ENCODE measurements at regions of chr11 and their contacts with region 1.

Region 1: GRCh38 chr11:60334005-60334620 is 7.1 kb downstream of the MS4A6E start:
- DNase-seq: no peak
- ATAC-seq: peak; percentile 65
- H3K4me3 ChIP-seq: no peak overlapping the region
- H3K27ac ChIP-seq: no peak overlapping the region
- H3K4me1 ChIP-seq: peaks cover 22% of the 10 kb centered on the region
- H3K27me3 ChIP-seq: no peaks in the 10 kb centered on the region
- CTCF ChIP-seq: peak; percentile 73 to 86 (median 74)
- EP300 ChIP-seq: no peak
- POLR2A ChIP-seq: no peak
- RAD21 ChIP-seq: peak; percentile 67

Region 2: DNA sequence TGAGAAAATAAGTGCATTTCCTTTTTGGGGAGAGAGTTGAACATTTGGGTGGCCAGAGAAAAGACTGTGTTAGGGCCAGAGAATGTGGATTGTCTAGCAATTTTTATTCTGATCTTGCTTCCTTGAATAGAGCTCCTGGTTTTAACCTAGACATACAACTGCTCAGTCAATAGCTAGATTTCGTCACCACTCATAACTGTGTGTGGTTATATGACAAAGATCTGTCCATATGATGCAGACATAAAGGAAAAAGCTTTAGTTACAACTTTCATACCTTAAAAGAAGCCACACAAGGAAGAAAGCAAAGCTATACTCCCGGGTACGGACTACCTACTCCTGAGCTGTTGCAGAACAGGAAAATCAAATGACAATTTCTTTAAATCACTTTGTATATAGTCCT is 188.4 kb before region 1 on chr11:
- CTCF ChIA-PET with region 1: no interaction called
- POLR2A ChIA-PET with region 1: interaction called, 10 read pairs
- RAD21 ChIA-PET with region 1: no interaction called
- SMC1A ChIA-PET with region 1: no interaction called
- in situ Hi-C with region 1: no loop called
- intact Hi-C with region 1: no loop called
- DNase-seq: no peak
- ATAC-seq: no peak
- H3K4me3 ChIP-seq: no peak overlapping the region
- H3K27ac ChIP-seq: no peak overlapping the region
- H3K4me1 ChIP-seq: no peaks in the 10 kb centered on the region
- H3K27me3 ChIP-seq: no peaks in the 10 kb centered on the region
- CTCF ChIP-seq: no peak
- EP300 ChIP-seq: no peak
- POLR2A ChIP-seq: no peak
- RAD21 ChIP-seq: no peak

Region 3: GRCh38 chr11:60310407-60311279 is 23.5 kb before region 1 on chr11:
- CTCF ChIA-PET with region 1: interaction called, 93 read pairs
- POLR2A ChIA-PET with region 1: no interaction called
- RAD21 ChIA-PET with region 1: interaction called, 8 read pairs
- SMC1A ChIA-PET with region 1: interaction called, 11 read pairs
- in situ Hi-C with region 1: no loop called
- intact Hi-C with region 1: loop called (anchors 1 kb)
- DNase-seq: peak; percentile 64
- ATAC-seq: peak; percentile 82
- H3K4me3 ChIP-seq: no peak overlapping the region
- H3K27ac ChIP-seq: peak overlapping the region; percentile 64
- H3K4me1 ChIP-seq: peaks cover 18% of the 10 kb centered on the region
- H3K27me3 ChIP-seq: no peaks in the 10 kb centered on the region
- CTCF ChIP-seq: no peak
- EP300 ChIP-seq: peak; percentile 94 to 95; a peak in 3 of 4 replicates
- POLR2A ChIP-seq: no peak
- RAD21 ChIP-seq: no peak

Region 4: GRCh38 chr11:60345489-60345888 is 11.4 kb after region 1 on chr11:
- CTCF ChIA-PET with region 1: interaction called, 135 read pairs
- POLR2A ChIA-PET with region 1: interaction called, 3 read pairs
- RAD21 ChIA-PET with region 1: interaction called, 30 read pairs
- SMC1A ChIA-PET with region 1: interaction called, 68 read pairs
- in situ Hi-C with region 1: no loop called
- intact Hi-C with region 1: no loop called
- DNase-seq: no peak
- ATAC-seq: peak; percentile 87
- H3K4me3 ChIP-seq: no peak overlapping the region
- H3K27ac ChIP-seq: no peak overlapping the region
- H3K4me1 ChIP-seq: peaks cover 11% of the 10 kb centered on the region
- H3K27me3 ChIP-seq: no peaks in the 10 kb centered on the region
- CTCF ChIP-seq: peak; percentile 63 to 68 (median 66)
- EP300 ChIP-seq: no peak
- POLR2A ChIP-seq: no peak
- RAD21 ChIP-seq: peak; percentile 64

Region 5: GRCh38 chr11:60615497-60615896 is 281.4 kb after region 1 on chr11:
- CTCF ChIA-PET with region 1: interaction called, 42 read pairs
- POLR2A ChIA-PET with region 1: no interaction called
- RAD21 ChIA-PET with region 1: interaction called, 6 read pairs
- SMC1A ChIA-PET with region 1: interaction called, 18 read pairs
- in situ Hi-C with region 1: no loop called
- intact Hi-C with region 1: loop called (anchors 2 kb)
- DNase-seq: no peak
- ATAC-seq: no peak
- H3K4me3 ChIP-seq: no peak overlapping the region
- H3K27ac ChIP-seq: no peak overlapping the region
- H3K4me1 ChIP-seq: no peaks in the 10 kb centered on the region
- H3K27me3 ChIP-seq: no peaks in the 10 kb centered on the region
- CTCF ChIP-seq: no peak
- EP300 ChIP-seq: no peak
- POLR2A ChIP-seq: no peak
- RAD21 ChIP-seq: no peak

Measured in GM12878 (cell line).